ENCODE measurements at regions of chr5 and their contacts with region 1.

Region 1: DNA sequence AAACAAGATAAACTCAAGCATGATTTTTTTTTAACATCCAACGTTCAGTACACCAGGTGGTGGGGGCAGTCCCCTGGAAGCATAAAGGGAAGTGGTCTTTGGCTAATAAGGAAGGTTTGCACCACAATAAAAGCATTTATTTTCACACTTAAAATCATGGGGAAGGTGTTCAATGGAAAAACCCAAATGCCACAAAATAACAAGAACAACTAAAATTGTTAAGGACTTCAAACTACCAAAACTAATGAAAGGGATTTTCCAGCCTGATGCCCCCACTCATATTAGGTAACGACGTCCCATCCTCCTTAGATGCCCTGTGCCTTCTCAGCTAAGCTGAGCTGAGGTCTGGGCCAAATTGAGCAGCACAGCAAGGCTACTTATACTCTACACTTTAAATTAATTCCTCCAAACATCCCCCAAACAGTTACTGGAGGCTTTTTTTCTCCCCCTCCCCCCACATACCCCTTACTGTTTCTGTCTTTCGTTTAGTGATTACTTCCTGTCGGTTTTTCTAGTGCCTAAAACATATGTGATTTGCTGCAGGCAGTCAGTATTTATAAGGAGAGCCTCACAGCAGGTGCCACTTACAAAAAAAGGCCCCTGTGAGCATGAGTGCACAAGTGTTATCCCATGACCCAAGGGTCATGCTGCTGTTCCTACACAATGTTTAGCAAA is 259.7 kb upstream of the ZNF608 start:
- DNase-seq: no peak
- ATAC-seq: peak; percentile 67
- H3K4me3 Mint-ChIP-seq: peak overlapping the region; percentile 66
- H3K27ac Mint-ChIP-seq: peak overlapping the region; percentile 90
- H3K4me1 Mint-ChIP-seq: peaks cover 71% of the 10 kb centered on the region
- H3K27me3 Mint-ChIP-seq: no peaks in the 10 kb centered on the region
- CTCF ChIP-seq: no peak

Region 2: DNA sequence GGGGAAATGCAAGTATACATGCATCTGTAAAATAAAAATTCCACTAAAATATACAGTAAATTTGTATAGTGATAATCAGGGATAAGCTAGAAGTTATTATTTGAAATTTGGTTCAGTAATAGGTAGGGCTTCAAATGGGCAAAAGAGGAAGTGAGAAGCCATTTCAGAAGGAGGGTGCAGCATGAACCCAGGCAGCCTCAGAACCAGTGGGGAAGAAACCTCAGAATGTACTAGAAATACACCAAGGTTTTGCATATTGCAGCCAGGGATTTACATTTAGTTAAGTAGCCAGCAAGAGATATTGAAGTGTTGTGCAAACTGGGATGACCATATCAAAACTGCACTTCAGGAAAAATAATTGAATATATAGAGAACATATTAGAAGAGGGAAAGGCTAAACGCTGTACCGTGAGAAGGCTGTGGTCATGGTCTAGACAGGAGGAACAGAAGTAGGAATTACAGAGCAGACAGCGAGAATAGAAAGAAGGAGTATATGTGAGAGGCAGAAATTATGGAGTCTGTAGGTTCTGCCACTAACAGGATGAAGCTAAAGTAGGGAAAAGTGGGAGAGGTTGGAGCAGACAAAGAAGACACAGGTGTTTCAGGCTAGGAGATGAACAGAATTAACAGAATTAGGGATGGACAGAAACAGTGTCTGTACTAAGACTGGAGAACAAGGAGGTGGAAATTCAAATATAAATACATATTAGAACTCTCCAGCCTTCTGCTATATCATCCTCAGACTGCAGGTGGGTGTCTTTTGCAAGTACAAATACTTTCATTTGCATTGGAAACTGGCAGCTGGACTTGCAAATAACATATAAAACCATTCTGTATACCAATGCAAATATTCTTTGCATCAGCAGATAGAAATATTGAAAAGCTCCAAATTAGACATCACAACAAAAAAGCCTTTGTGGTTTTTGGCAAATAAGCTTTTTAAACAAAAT is 595.3 kb before region 1 on chr5:
- CTCF ChIA-PET with region 1: no interaction called
- POLR2A ChIA-PET with region 1: no interaction called
- intact Hi-C with region 1: loop called (anchors 5 kb)
- DNase-seq: no peak
- ATAC-seq: peak; percentile 96
- H3K4me3 Mint-ChIP-seq: peak overlapping the region; percentile 51
- H3K27ac Mint-ChIP-seq: no peak overlapping the region
- H3K4me1 Mint-ChIP-seq: peaks cover 24% of the 10 kb centered on the region
- H3K27me3 Mint-ChIP-seq: peaks cover 3% of the 10 kb centered on the region
- CTCF ChIP-seq: no peak

Region 3: DNA sequence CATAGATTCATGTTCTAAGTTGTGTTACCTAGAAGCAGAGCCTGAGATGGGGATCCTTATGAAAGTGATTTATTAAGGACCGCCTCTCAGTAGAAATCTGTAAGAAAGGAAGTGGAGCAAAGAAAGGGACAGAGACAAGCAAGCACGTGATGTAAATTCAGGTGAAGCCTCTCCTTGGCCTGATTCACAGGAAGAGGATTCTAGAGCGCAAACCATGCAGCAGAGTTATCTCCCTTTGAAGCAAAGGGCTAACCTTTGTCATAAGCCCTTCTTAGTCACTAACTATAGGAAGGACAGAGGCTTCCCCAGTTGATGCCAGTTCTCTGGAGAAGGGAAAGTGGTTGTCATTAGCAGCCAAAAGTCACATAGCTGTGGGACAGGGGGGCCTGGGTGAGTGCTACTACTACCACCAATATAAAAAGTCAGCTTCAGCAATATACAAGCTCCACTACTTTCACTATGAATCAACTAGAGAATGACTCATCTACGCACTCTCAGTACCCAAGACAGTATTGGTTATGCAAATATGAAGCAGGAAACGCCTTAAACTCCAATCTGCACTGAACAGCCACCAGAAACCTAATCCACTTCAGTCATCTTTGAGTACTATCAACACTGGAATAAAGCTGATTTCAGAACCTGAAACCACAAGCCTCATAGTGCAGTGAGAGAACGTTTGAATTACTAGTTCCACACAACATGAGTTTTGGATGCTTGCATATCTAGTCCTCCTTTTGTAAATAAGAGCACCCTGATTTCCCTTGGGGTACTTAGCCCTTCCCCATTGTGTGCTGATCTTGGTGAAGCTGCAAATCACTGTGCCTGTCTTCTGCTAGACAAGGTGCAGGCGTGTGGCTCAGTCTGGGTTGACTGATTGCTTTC is 422.4 kb before region 1 on chr5:
- CTCF ChIA-PET with region 1: no interaction called
- POLR2A ChIA-PET with region 1: no interaction called
- intact Hi-C with region 1: loop called (anchors 1 kb)
- DNase-seq: peak; percentile 23
- ATAC-seq: peak; percentile 89
- H3K4me3 Mint-ChIP-seq: peak overlapping the region; percentile 61
- H3K27ac Mint-ChIP-seq: peak overlapping the region; percentile 94
- H3K4me1 Mint-ChIP-seq: peaks cover 36% of the 10 kb centered on the region
- H3K27me3 Mint-ChIP-seq: no peaks in the 10 kb centered on the region
- CTCF ChIP-seq: no peak

Region 4: GRCh38 chr5:124902097-124902821 is 103.9 kb before region 1 on chr5:
- CTCF ChIA-PET with region 1: no interaction called
- POLR2A ChIA-PET with region 1: interaction called, 4 read pairs
- intact Hi-C with region 1: loop called (anchors 1 kb)
- DNase-seq: peak; percentile 37
- ATAC-seq: peak; percentile 98
- H3K4me3 Mint-ChIP-seq: peak overlapping the region; percentile 72
- H3K27ac Mint-ChIP-seq: peak overlapping the region; percentile 88
- H3K4me1 Mint-ChIP-seq: peaks cover 40% of the 10 kb centered on the region
- H3K27me3 Mint-ChIP-seq: no peaks in the 10 kb centered on the region
- CTCF ChIP-seq: no peak

Region 5: GRCh38 chr5:124952079-124952478 is 54.1 kb before region 1 on chr5:
- CTCF ChIA-PET with region 1: no interaction called
- POLR2A ChIA-PET with region 1: interaction called, 4 read pairs
- intact Hi-C with region 1: loop called (anchors 5 kb)
- DNase-seq: peak; percentile 25
- ATAC-seq: peak; percentile 82
- H3K4me3 Mint-ChIP-seq: no peak overlapping the region
- H3K27ac Mint-ChIP-seq: peak overlapping the region; percentile 78
- H3K4me1 Mint-ChIP-seq: peaks cover 21% of the 10 kb centered on the region
- H3K27me3 Mint-ChIP-seq: no peaks in the 10 kb centered on the region
- CTCF ChIP-seq: no peak

Region 6: GRCh38 chr5:125412561-125413495 is 406.7 kb after region 1 on chr5:
- CTCF ChIA-PET with region 1: no interaction called
- POLR2A ChIA-PET with region 1: interaction called, 12 read pairs
- intact Hi-C with region 1: loop called (anchors 10 kb)
- DNase-seq: peak; percentile 18
- ATAC-seq: peak; percentile 72
- H3K4me3 Mint-ChIP-seq: peak overlapping the region; percentile 29
- H3K27ac Mint-ChIP-seq: no peak overlapping the region
- H3K4me1 Mint-ChIP-seq: peaks cover 38% of the 10 kb centered on the region
- H3K27me3 Mint-ChIP-seq: no peaks in the 10 kb centered on the region
- CTCF ChIP-seq: no peak